ENCODE measurements at regions of chr10 and their contacts with region 1.

Region 1: GRCh38 chr10:109902934-109903589 is 20.2 kb downstream of the XPNPEP1 start:
- DNase-seq: no peak
- H3K4me3 Mint-ChIP-seq: peak overlapping the region; percentile 59
- H3K27ac Mint-ChIP-seq: peak overlapping the region; percentile 96
- H3K4me1 Mint-ChIP-seq: peaks cover 64% of the 10 kb centered on the region
- H3K27me3 Mint-ChIP-seq: no peaks in the 10 kb centered on the region
- CTCF ChIP-seq: no peak

Region 2: GRCh38 chr10:109852475-109853037 is 50.5 kb before region 1 on chr10:
- CTCF ChIA-PET with region 1: no interaction called
- POLR2A ChIA-PET with region 1: no interaction called
- intact Hi-C with region 1: no loop called
- DNase-seq: peak; percentile 82
- H3K4me3 Mint-ChIP-seq: no peak overlapping the region
- H3K27ac Mint-ChIP-seq: no peak overlapping the region
- H3K4me1 Mint-ChIP-seq: peaks cover 9% of the 10 kb centered on the region
- H3K27me3 Mint-ChIP-seq: no peaks in the 10 kb centered on the region
- CTCF ChIP-seq: peak; percentile 96

Region 3: DNA sequence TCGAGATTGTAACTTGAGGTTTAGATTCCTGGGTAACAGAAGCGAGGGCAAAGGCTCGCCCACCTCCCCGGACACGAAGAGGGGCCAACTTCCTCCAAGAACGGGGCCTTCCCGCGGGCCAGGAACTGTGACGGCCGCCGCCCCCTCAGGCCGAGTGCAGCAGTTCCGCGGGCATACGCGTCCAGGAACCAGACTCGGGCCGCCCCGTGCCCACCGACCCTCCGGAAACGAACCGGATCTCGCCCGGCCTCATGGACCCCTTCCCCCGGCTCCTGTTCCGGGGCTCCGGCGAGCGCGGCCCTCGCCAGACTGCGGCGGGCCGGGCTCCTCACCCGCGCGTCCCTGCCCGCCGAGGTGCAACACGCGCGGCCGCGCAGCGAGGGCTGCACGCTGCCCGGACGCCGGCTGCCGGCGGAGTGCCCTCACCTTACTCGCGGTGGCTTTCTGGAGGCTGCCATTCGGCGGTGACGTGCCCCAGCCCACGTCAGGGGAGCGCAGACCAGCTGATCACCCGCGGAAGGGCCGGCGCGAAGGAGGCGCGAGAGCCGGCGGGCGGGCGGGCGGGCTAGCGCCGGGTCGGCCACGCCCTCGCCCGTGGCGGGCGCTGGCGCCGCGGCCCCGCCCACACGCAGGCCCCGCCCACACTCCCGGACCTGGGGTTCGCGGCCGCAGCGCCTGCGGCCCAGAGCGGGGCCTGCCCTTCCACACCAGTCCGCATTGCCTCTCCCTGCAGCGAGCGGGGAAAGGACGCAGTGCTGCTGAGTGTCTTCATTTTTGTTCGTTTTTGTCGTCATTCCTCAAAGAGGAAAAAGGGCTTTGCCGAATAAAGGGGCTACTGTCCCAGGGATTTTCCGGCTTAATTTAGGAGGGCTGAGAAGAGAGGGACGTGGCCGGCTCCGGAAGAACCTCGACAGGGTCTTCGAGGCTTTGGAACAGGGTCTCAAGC is 20.2 kb after region 1 on chr10 and contains the start of gene XPNPEP1:
- CTCF ChIA-PET with region 1: interaction called, 5 read pairs
- POLR2A ChIA-PET with region 1: interaction called, 122 read pairs
- intact Hi-C with region 1: no loop called
- DNase-seq: peak; percentile 79
- H3K4me3 Mint-ChIP-seq: peak within 1 kb of the TSS; percentile 67
- H3K27ac Mint-ChIP-seq: peak within 1 kb of the TSS; percentile 91
- H3K4me1 Mint-ChIP-seq: peaks cover 34% of the 10 kb centered on the region
- H3K27me3 Mint-ChIP-seq: no peaks in the 10 kb centered on the region
- CTCF ChIP-seq: no peak
- total RNA-seq, gene XPNPEP1: 51.6 and 52.1 TPM in 2 replicates

Region 4: DNA sequence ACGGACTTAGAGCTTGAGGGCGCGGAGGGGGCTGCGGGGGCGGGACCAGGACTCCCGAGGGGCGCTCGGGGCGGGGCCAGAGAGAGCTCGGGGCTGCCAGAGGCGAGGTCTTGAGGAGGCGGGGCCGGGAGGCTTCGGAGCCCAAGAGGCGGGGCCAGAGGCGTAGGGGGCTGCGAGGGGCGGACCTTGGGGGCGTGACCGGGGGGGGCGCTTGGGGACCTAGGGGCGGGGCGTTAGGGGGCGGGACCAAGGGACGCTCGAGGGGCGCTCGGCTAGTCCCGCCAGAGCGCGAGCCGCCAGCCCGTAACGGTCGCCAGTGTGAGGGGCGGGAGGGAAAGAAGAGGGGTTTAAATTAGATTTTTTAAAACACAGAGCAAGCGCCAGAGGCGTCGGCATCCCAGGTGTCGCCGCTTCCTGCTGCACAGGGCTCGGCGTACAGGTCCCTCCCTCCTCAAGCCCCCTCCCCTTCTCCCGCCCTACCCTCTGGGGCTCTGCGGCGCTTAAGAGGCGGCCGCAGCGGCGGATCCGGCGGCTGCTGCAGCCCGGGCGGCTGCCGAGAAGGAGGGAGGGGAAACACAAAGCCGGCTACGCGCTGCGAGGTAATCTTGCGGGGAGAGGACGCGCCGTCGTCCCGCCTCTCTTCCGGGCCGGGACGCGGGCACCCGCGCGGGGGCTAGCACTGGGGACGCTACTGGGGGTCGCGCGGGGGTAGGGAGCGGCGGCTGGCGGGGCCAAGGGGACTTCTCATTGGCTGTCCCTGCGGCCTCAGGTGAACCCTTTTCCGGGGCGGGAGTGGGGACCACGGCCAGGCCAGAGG is 104.8 kb after region 1 on chr10 and contains the start of gene ADD3:
- CTCF ChIA-PET with region 1: interaction called, 6 read pairs
- POLR2A ChIA-PET with region 1: interaction called, 15 read pairs
- intact Hi-C with region 1: no loop called
- DNase-seq: peak; percentile 84
- H3K4me3 Mint-ChIP-seq: no peak within 1 kb of the TSS
- H3K27ac Mint-ChIP-seq: peak within 1 kb of the TSS; percentile 19
- H3K4me1 Mint-ChIP-seq: peaks cover 17% of the 10 kb centered on the region
- H3K27me3 Mint-ChIP-seq: no peaks in the 10 kb centered on the region
- CTCF ChIP-seq: no peak
- total RNA-seq, gene ADD3: 11.2 and 14.5 TPM in 2 replicates